Naive thymus-derived CD4-positive, alpha-beta T cell (primary cell): ENCODE measurements at regions of chr4 and their contacts with region 1.

Region 1: DNA sequence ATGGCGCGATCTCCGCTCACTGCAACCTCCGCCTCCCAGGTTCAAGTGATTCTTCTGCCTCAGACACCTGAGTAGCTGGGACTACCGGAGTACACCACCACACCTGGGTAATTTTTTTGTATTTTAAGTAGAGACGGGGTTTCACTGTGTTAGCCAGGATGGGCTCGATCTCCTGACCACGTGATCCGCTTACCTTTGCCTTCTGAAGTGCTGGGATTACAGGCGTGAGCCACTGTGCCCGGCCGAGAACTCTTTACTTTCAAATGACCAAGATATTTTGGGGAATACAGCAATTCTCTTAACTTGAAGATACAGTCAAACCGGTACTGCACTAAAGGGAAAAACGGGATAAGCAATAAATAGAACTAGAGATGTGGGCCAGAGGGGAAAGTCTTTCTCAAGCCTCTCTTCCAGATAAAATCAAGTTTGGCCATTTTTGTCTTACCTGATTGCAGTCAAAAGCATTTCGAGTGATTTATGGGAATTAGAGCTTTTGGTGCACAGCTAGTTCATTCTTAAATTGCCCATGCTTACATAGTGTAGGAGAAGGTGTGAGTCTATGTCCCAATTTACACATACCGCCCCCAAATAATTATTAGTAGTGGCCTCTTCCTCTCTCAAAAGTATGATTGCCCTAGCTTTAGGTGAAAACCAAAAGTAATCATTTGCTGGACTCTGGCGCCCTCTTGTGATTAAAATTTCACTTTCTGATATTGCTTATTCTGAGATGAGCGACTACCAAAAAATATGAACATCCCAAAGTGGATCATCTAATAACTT is 53.2 kb upstream of the ABCG2 start:
- DNase-seq: peak in 7 of 9 donors; percentile 28 to 65 (median 55)
- ATAC-seq: peak; percentile 60
- H3K4me3 ChIP-seq: no peak overlapping the region
- H3K4me3 Mint-ChIP-seq: no peak overlapping the region
- H3K27ac ChIP-seq: no peak overlapping the region
- H3K27ac Mint-ChIP-seq: no peak overlapping the region
- H3K4me1 ChIP-seq: no peaks in the 10 kb centered on the region
- H3K4me1 Mint-ChIP-seq: peaks cover 0 to 7% (median 4%) of the 10 kb centered on the region in 7 donors
- H3K27me3 ChIP-seq: no peaks in the 10 kb centered on the region
- H3K27me3 Mint-ChIP-seq: peaks cover 0 to 21% (median 0%) of the 10 kb centered on the region in 5 donors

Region 2: DNA sequence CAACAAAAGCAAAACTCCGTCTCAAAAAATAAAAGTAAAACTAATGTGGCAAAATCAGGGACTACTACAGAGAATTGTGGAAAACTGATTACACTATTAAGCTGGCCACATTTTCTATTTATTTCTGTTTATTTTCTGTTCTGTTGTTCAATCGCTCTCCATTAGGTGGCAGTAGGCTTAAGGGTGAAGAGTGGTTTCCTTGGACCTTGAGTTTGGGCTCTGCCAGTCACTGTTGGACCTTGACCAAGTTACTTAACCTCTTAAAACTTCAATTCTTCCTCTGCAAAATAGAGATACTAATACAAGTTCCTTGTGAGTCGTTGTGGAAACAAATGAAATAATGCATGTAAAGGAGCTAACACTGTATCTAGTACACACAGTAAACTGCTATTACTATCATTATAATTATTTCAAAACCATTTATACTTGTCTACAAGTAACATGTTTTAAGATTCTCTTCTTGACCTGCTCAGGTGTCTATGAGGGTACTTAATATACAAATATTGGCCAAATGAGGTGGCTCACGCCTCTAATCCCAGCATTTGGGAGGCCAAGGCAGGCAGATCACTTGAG is 835.9 kb before region 1 on chr4:
- CTCF ChIA-PET with region 1: no interaction called
- POLR2A ChIA-PET with region 1: no interaction called
- intact Hi-C with region 1: loop called in 1 of 2 experiments (anchors 2 kb)
- DNase-seq: peak in 4 of 9 donors; percentile 18 to 36 (median 24)
- ATAC-seq: peak; percentile 62
- H3K4me3 ChIP-seq: no peak overlapping the region
- H3K4me3 Mint-ChIP-seq: no peak overlapping the region
- H3K27ac ChIP-seq: no peak overlapping the region
- H3K27ac Mint-ChIP-seq: no peak overlapping the region
- H3K4me1 ChIP-seq: no peaks in the 10 kb centered on the region
- H3K4me1 Mint-ChIP-seq: peaks cover 0 to 9% (median 0%) of the 10 kb centered on the region in 7 donors
- H3K27me3 ChIP-seq: no peaks in the 10 kb centered on the region
- H3K27me3 Mint-ChIP-seq: no peaks in the 10 kb centered on the region

Region 3: DNA sequence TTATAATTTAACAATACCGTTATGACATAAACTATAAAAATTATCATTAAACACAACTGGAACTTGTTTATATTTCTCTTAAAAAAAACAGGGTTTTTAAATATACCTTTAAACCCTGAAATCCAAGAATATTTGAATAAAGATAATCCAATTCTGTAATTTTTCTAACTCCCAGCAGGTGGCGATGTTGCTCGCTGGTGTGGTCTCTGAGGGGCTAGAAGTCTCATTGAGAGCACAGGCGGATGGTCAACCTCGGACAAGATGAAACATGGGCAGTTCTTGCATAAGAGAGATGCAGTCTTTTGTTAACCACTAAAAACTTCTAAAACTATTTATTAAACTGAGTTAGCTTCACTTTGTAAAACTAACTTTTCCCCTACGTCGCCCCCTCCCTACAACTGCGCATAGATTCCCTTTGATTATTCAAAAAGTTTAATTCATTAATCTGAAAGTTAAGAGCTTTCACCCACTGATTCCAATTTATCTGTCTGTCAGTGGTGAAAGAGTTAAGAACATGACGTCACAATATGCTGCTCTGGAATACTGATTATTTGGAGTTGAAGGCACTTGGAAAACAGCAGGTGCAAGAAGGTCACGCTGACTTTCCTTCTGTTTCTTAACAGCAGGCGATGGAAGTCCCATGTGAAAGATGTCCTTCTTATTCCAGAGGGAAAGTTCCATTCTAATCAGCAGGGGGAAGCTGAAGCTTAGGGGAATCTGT is 532.1 kb before region 1 on chr4:
- CTCF ChIA-PET with region 1: interaction called, 4 read pairs
- POLR2A ChIA-PET with region 1: no interaction called
- intact Hi-C with region 1: loop called in 1 of 2 experiments (anchors 1 kb)
- DNase-seq: peak in 5 of 9 donors; percentile 7 to 23 (median 22)
- ATAC-seq: no peak
- H3K4me3 ChIP-seq: no peak overlapping the region
- H3K4me3 Mint-ChIP-seq: no peak overlapping the region
- H3K27ac ChIP-seq: no peak overlapping the region
- H3K27ac Mint-ChIP-seq: no peak overlapping the region
- H3K4me1 ChIP-seq: no peaks in the 10 kb centered on the region
- H3K4me1 Mint-ChIP-seq: no peaks in the 10 kb centered on the region
- H3K27me3 ChIP-seq: no peaks in the 10 kb centered on the region
- H3K27me3 Mint-ChIP-seq: peaks cover 0 to 10% (median 3%) of the 10 kb centered on the region in 5 donors

Region 4: GRCh38 chr4:87716371-87717265 is 495.0 kb before region 1 on chr4:
- CTCF ChIA-PET with region 1: no interaction called
- POLR2A ChIA-PET with region 1: no interaction called
- intact Hi-C with region 1: no loop called
- DNase-seq: no peak
- ATAC-seq: no peak
- H3K4me3 ChIP-seq: no peak overlapping the region
- H3K4me3 Mint-ChIP-seq: no peak overlapping the region
- H3K27ac ChIP-seq: no peak overlapping the region
- H3K27ac Mint-ChIP-seq: no peak overlapping the region
- H3K4me1 ChIP-seq: no peaks in the 10 kb centered on the region
- H3K4me1 Mint-ChIP-seq: no peaks in the 10 kb centered on the region
- H3K27me3 ChIP-seq: no peaks in the 10 kb centered on the region
- H3K27me3 Mint-ChIP-seq: peaks cover 0 to 13% (median 5%) of the 10 kb centered on the region in 5 donors

Region 5: DNA sequence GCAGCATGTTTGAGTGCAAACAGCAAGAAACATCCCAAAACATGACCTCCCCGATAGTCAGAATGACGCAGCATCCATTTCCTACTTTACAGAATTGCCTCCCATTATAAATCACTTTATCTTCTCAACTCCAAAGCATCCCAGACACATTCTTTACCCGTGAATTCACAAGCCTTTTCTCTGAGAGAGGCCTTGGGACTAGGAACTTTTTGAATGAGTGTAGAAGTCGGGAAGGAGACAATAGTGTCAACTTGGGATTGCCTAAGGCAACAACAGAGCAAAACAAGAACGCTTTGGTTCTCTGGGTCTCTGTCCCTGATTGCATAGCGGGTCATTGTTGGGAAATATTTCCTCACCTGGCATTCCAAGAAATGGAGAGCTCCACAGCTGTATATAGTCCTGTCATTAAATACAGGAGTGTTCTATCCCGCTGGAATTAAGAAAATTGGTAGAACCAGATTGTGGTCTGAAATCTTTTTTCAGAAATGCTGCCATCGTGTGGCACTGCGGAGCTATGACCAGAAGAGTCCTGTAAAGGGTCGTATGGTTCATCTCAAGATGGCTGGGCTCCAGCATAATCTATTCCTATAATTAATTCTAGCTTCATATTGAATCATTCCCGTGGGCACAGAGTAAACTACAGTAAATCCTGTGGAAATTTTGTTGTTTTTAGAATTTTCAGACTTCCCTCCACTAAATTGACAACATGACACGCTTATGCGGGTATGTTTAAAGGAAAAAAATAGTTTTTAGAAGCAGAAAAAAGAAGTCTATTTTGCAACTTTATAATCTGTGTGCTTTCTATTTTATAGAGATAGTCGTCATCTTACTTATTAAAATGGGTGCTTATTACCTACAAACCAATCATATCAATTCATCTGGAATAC is 238.1 kb before region 1 on chr4:
- CTCF ChIA-PET with region 1: no interaction called
- POLR2A ChIA-PET with region 1: no interaction called
- intact Hi-C with region 1: loop called (anchors 2 to 5 kb)
- DNase-seq: peak in 3 of 9 donors; percentile 13 to 29 (median 17)
- ATAC-seq: peak; percentile 76
- H3K4me3 ChIP-seq: no peak overlapping the region
- H3K4me3 Mint-ChIP-seq: no peak overlapping the region
- H3K27ac ChIP-seq: no peak overlapping the region
- H3K27ac Mint-ChIP-seq: no peak overlapping the region
- H3K4me1 ChIP-seq: peaks cover 5 to 7% of the 10 kb centered on the region in 2 donors
- H3K4me1 Mint-ChIP-seq: peaks cover 0 to 14% (median 6%) of the 10 kb centered on the region in 7 donors
- H3K27me3 ChIP-seq: peaks cover 0 to 2% of the 10 kb centered on the region in 2 donors
- H3K27me3 Mint-ChIP-seq: peaks cover 44 to 63% (median 56%) of the 10 kb centered on the region in 5 donors

Region 6: DNA sequence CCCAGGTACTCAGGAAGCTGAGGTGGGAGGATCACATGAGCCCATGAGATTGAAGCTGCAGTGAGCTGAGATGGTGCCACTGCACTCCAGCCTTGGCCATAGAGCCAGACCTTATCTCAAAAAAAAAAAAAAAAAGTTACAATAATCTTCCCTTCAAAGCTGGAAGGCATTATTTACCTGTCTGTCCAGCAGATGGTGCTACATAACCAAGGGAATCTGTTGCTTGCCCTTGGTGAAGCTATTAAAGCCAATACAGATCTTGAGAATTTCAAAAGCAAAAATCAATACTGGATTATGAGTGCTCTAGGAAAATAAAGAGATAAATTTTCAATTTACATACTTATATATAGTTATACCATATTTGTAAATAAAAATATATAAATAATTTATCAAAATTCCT is 178.4 kb before region 1 on chr4:
- CTCF ChIA-PET with region 1: interaction called, 23 read pairs
- POLR2A ChIA-PET with region 1: no interaction called
- intact Hi-C with region 1: loop called (anchors 1 kb)
- DNase-seq: peak in 7 of 9 donors; percentile 19 to 57 (median 32)
- ATAC-seq: peak; percentile 75
- H3K4me3 ChIP-seq: no peak overlapping the region
- H3K4me3 Mint-ChIP-seq: no peak overlapping the region
- H3K27ac ChIP-seq: no peak overlapping the region
- H3K27ac Mint-ChIP-seq: no peak overlapping the region
- H3K4me1 ChIP-seq: no peaks in the 10 kb centered on the region
- H3K4me1 Mint-ChIP-seq: peaks cover 0 to 3% (median 0%) of the 10 kb centered on the region in 7 donors
- H3K27me3 ChIP-seq: no peaks in the 10 kb centered on the region
- H3K27me3 Mint-ChIP-seq: no peaks in the 10 kb centered on the region